CD14-positive monocyte (primary cell): ENCODE measurements at regions of chr20 and their contacts with region 1.

Region 1: GRCh38 chr20:55386686-55387085 is 618.6 kb downstream of the CBLN4 start:
- DNase-seq: no peak
- H3K4me3 ChIP-seq: no peak overlapping the region
- H3K4me3 Mint-ChIP-seq: no peak overlapping the region
- H3K27ac ChIP-seq: no peak overlapping the region
- H3K27ac Mint-ChIP-seq: no peak overlapping the region
- H3K4me1 ChIP-seq: no peaks in the 10 kb centered on the region
- H3K4me1 Mint-ChIP-seq: no peaks in the 10 kb centered on the region
- H3K27me3 ChIP-seq: no peaks in the 10 kb centered on the region
- H3K27me3 Mint-ChIP-seq: no peaks in the 10 kb centered on the region
- CTCF ChIP-seq: no peak

Region 2: DNA sequence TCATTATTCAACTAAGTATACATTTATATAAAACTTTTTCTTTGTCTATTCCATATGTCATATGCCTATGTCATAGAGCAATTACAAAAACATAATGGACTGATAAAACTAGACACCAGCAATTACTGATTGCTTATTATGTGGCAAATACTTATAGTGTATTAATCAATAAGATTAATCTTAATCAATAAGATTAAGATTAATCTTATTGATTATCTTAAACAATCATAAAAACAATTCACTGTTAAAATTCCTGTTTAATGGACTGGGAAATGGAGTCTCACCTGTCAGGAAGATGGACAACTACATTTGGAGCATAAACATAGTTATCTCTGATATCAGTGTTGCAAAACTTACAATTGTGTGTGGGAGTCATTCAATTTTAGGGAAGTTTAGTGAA is 91.6 kb before region 1 on chr20:
- intact Hi-C with region 1: loop called in 1 of 2 experiments (anchors 5 kb)
- DNase-seq: no peak
- H3K4me3 ChIP-seq: no peak overlapping the region
- H3K4me3 Mint-ChIP-seq: no peak overlapping the region
- H3K27ac ChIP-seq: no peak overlapping the region
- H3K27ac Mint-ChIP-seq: no peak overlapping the region
- H3K4me1 ChIP-seq: no peaks in the 10 kb centered on the region
- H3K4me1 Mint-ChIP-seq: no peaks in the 10 kb centered on the region
- H3K27me3 ChIP-seq: no peaks in the 10 kb centered on the region
- H3K27me3 Mint-ChIP-seq: no peaks in the 10 kb centered on the region
- CTCF ChIP-seq: no peak